ENCODE measurements at regions of chr13 and their contacts with region 1.

Region 1: GRCh38 chr13:32315238-32316027 is at the starts of genes BRCA2 and ZAR1L:
- DNase-seq: peak; percentile 68 to 90
- H3K4me3 ChIP-seq: peak within 1 kb of the TSS; percentile 60 to 69 (median 64)
- H3K27ac ChIP-seq: peak within 1 kb of the TSS; percentile 93
- H3K4me1 ChIP-seq: peaks cover 0 to 5% (median under 1%) of the 10 kb centered on the region in 4 experiments; a peak in 5 of 7 replicates
- H3K27me3 ChIP-seq: no peaks in the 10 kb centered on the region
- CTCF ChIP-seq: no peak
- EP300 ChIP-seq: no peak
- POLR2A ChIP-seq: peak; percentile 65 to 96
- RAD21 ChIP-seq: no peak
- total RNA-seq, gene BRCA2: 22.2 and 24.9 TPM in 2 replicates
- total RNA-seq, gene ZAR1L: 0.19 TPM in 1 of 2 replicates, not detected in the other

Region 2: GRCh38 chr13:32031025-32031814 is 284.2 kb before region 1 on chr13 and contains the start of gene FRY:
- CTCF ChIA-PET with region 1: no interaction called
- POLR2A ChIA-PET with region 1: interaction called, 10 read pairs
- DNase-seq: peak; percentile 58 to 85
- H3K4me3 ChIP-seq: peak within 1 kb of the TSS; percentile 56 to 77 (median 68)
- H3K27ac ChIP-seq: peak within 1 kb of the TSS; percentile 30; the same call in 1 of the 2 replicates
- H3K4me1 ChIP-seq: peaks cover 2 to 12% (median 6%) of the 10 kb centered on the region in 4 experiments; a peak in 6 of 7 replicates
- H3K27me3 ChIP-seq: no peaks in the 10 kb centered on the region
- CTCF ChIP-seq: peak in 1 of 3 experiments; percentile 12; a peak in 1 of 4 replicates
- EP300 ChIP-seq: no peak
- POLR2A ChIP-seq: peak in 1 of 2 experiments; percentile 49; a peak in 2 of 3 replicates
- RAD21 ChIP-seq: peak; percentile 4 to 28; a peak in 3 of 4 replicates
- total RNA-seq, gene FRY: 7.9 and 9.2 TPM in 2 replicates

Region 3: DNA sequence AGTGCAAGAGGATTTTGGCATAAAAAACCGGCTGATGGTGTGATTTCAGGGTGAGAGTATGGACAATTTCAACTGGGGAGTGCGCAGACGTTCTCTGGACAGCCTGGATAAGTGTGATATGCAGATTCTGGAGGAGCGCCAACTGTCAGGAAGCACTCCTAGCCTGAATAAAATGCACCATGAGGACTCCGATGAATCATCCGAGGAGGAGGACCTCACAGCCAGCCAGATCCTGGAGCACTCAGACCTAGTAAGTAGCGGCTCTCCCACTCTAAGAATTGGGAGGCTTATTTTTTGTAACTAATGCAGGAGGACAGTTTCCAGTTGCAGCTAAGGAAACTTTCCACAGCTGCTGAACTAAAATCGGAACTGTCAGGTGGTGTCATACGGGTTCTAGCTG is 53.9 kb before region 1 on chr13:
- CTCF ChIA-PET with region 1: no interaction called
- POLR2A ChIA-PET with region 1: interaction called, 12 read pairs
- DNase-seq: no peak
- H3K4me3 ChIP-seq: no peak overlapping the region
- H3K27ac ChIP-seq: no peak overlapping the region
- H3K4me1 ChIP-seq: no peaks in the 10 kb centered on the region
- H3K27me3 ChIP-seq: no peaks in the 10 kb centered on the region
- CTCF ChIP-seq: no peak
- EP300 ChIP-seq: no peak
- POLR2A ChIP-seq: no peak
- RAD21 ChIP-seq: no peak

Region 4: GRCh38 chr13:32454886-32455593 is 139.6 kb after region 1 on chr13:
- CTCF ChIA-PET with region 1: no interaction called
- POLR2A ChIA-PET with region 1: no interaction called
- DNase-seq: no peak
- H3K4me3 ChIP-seq: no peak overlapping the region
- H3K27ac ChIP-seq: no peak overlapping the region
- H3K4me1 ChIP-seq: no peaks in the 10 kb centered on the region
- H3K27me3 ChIP-seq: no peaks in the 10 kb centered on the region
- CTCF ChIP-seq: no peak
- EP300 ChIP-seq: no peak
- POLR2A ChIP-seq: no peak
- RAD21 ChIP-seq: no peak